Mammary epithelial cell (primary cell): ENCODE measurements at regions of chr5 and their contacts with region 1.

Region 1: GRCh38 chr5:132456296-132457001 is 34.1 kb downstream of the IRF1 start:
- DNase-seq: no peak
- H3K4me3 ChIP-seq: no peak overlapping the region
- H3K27ac ChIP-seq: no peak overlapping the region
- H3K4me1 ChIP-seq: peaks cover 43% of the 10 kb centered on the region
- H3K27me3 ChIP-seq: no peaks in the 10 kb centered on the region
- CTCF ChIP-seq: no peak

Region 2: GRCh38 chr5:132283423-132284043 is 172.9 kb before region 1 on chr5:
- CTCF ChIA-PET with region 1: no interaction called
- dilution Hi-C with region 1: no loop called
- in situ Hi-C with region 1: no loop called
- intact Hi-C with region 1: no loop called
- DNase-seq: peak; percentile 48
- H3K4me3 ChIP-seq: no peak overlapping the region
- H3K27ac ChIP-seq: no peak overlapping the region
- H3K4me1 ChIP-seq: peaks cover 3% of the 10 kb centered on the region
- H3K27me3 ChIP-seq: no peaks in the 10 kb centered on the region
- CTCF ChIP-seq: peak; percentile 58 to 77

Region 3: DNA sequence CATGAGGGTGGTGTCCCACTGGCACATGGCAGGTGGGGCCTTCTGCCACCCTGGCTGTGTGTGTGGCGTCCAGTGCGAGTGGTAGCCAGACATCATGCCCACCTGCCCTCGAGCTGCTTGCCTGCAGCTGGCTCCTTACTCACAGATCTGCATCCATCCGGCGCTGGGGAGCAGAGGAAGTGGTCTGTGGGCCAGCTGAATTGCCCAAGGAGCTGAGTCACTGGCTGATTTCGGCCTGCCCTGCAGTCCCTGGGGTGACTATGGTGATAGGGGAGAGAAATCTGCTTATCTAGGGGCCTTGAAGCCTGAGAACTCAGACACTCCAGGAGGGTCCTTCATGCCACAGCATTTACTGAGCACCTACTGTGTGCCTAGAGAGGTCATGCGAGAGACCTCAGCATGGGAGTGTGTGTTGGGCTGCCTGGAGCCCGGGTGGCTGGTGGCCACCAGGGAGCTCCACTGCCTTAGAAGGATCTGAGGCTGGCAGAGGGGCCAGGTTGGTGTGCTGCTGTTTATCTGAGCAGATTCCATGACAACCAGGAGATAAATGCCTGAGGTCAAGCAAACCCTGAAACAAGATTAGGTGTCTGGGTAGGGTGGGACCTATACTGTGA is 29.8 kb before region 1 on chr5:
- CTCF ChIA-PET with region 1: no interaction called
- dilution Hi-C with region 1: no loop called
- in situ Hi-C with region 1: no loop called
- intact Hi-C with region 1: loop called (anchors 1 kb)
- DNase-seq: peak; percentile 95
- H3K4me3 ChIP-seq: no peak overlapping the region
- H3K27ac ChIP-seq: peak overlapping the region; percentile 92
- H3K4me1 ChIP-seq: peaks cover 63% of the 10 kb centered on the region
- H3K27me3 ChIP-seq: no peaks in the 10 kb centered on the region
- CTCF ChIP-seq: peak; percentile 27 to 44

Region 4: DNA sequence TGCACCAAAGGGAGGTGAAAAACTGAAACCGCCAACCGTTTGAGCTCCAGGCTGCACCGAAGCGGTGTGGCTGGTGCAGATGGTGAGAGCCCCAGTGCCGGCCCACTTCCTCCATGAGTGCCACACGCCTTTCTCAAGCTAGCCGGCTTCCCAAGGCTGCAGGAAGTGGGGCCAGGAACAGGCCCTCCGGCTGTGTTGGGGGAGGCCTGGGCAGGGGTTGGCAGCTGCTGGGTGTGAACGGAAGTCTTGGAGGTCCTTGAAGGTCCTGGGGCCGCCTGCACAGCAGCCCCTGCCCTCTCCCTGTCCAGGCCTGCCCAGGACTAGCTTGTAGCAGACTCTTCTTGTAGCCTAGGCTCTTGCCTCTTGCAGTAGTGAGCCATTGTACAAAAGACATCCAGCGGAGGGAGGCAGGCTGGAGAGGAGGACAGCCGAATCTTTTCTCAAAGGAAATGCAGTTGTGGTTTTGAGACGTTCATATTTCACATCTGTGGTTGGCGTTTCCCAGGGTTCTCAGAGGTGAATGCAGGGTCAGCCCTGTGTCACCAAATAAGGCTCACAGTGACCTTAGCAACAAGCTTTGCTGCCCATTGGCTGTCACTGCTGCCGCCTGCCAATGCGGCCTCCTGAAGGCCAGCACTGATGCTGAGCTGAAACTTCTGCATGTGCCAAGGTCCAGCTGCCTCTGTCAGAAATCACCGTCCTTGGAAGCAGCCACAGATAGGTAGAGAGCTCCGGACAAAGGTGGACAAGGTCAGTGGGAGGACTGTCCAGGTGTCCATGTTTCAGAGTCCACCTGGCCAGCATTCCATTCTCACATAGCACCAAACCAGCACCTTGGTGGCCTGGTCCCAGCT is 10.2 kb after region 1 on chr5:
- CTCF ChIA-PET with region 1: no interaction called
- dilution Hi-C with region 1: no loop called
- in situ Hi-C with region 1: no loop called
- intact Hi-C with region 1: loop called (anchors 1 kb)
- DNase-seq: peak; percentile 78
- H3K4me3 ChIP-seq: no peak overlapping the region
- H3K27ac ChIP-seq: peak overlapping the region; percentile 19
- H3K4me1 ChIP-seq: peaks cover 42% of the 10 kb centered on the region
- H3K27me3 ChIP-seq: no peaks in the 10 kb centered on the region
- CTCF ChIP-seq: no peak

Region 5: DNA sequence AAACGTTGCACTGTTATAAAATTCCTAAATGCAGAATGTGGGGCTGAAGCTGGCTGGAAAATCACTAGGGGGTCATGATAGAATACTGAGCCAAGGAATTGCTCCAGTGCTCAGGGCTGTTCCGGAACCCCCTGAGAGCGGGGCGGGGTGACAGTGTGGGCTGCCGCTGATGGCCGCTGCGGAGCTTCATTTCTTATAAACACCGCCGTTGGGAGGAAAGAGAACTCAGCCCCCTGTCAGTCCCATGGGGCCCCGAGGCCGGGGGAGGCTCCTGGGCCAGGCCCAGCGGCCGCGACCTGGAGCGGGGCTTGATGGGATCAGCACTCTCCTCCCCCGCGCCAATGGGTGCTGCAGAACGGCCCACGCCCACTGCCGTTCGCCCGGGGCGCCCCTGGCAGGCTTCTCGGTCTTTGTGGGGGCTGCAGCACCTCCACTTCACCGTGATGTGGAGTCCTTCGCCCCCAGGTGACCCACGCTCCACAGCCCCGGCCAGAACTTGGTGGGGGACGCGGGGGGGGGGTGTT is 39.3 kb after region 1 on chr5:
- CTCF ChIA-PET with region 1: interaction called, 3 read pairs
- dilution Hi-C with region 1: no loop called
- in situ Hi-C with region 1: no loop called
- intact Hi-C with region 1: loop called (anchors 5 kb)
- DNase-seq: peak; percentile 41
- H3K4me3 ChIP-seq: peak overlapping the region; percentile 3 to 70 (median 31)
- H3K27ac ChIP-seq: peak overlapping the region; percentile 45
- H3K4me1 ChIP-seq: peaks cover 37% of the 10 kb centered on the region
- H3K27me3 ChIP-seq: no peaks in the 10 kb centered on the region
- CTCF ChIP-seq: no peak